CD4-positive, alpha-beta memory T cell (primary cell): ENCODE measurements at regions of chr22 and their contacts with region 1.

Region 1: DNA sequence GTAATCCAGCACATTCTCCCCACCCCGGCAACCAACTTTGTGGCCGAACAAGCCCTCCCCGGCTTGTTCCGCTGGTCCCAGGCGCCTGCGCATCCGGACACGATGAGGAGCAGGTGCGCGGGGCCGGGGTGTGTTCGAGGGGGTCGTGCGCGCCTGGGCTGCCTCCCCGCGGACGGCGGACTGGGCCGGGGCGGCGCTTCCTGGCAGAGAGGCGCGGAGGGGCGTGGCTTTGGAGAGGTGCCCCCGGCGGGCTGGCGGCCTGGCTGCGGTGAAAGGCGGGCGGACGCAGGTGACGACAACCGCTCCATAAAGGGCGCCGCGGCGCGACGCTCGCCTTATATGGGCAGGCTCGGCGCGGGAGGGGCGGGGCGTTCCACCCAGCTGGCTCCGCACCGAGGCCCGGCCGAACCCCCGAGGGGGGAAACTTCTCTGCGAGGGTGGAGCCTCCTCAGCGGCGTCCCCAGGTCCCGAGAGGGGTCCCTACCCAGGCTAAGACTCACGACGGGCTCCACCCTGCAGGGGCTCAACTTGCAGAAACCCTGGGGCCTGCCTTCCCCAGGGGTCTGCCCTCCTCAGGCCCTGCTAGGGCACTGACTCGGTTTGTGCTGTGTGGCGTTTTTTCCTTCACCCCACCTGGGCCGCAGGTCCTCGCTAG is 26.4 kb downstream of the TXN2 start:
- DNase-seq: peak; percentile 93 to 95 (median 94)
- H3K4me3 ChIP-seq: peak overlapping the region; percentile 57 to 78
- H3K4me3 Mint-ChIP-seq: peak overlapping the region; percentile 53 to 85 (median 82)
- H3K27ac ChIP-seq: peak overlapping the region; percentile 88
- H3K27ac Mint-ChIP-seq: peak overlapping the region; percentile 92 to 98 (median 93)
- H3K4me1 ChIP-seq: peaks cover 55% of the 10 kb centered on the region
- H3K4me1 Mint-ChIP-seq: peaks cover 29 to 48% (median 44%) of the 10 kb centered on the region in 4 donors
- H3K27me3 ChIP-seq: no peaks in the 10 kb centered on the region
- H3K27me3 Mint-ChIP-seq: no peaks in the 10 kb centered on the region

Region 2: GRCh38 chr22:36369922-36370791 is 84.9 kb before region 1 on chr22:
- CTCF ChIA-PET with region 1: interaction called, 3 read pairs
- POLR2A ChIA-PET with region 1: interaction called, 36 read pairs
- intact Hi-C with region 1: no loop called
- DNase-seq: peak in 1 of 5 donors; percentile 65
- H3K4me3 ChIP-seq: peak overlapping the region in 1 of 2 donors; percentile 32
- H3K4me3 Mint-ChIP-seq: peak overlapping the region; percentile 84 to 93 (median 88)
- H3K27ac ChIP-seq: peak overlapping the region; percentile 91
- H3K27ac Mint-ChIP-seq: peak overlapping the region; percentile 92 to 99 (median 98)
- H3K4me1 ChIP-seq: peaks cover 100% of the 10 kb centered on the region
- H3K4me1 Mint-ChIP-seq: peaks cover 74 to 100% (median 87%) of the 10 kb centered on the region in 4 donors
- H3K27me3 ChIP-seq: no peaks in the 10 kb centered on the region
- H3K27me3 Mint-ChIP-seq: no peaks in the 10 kb centered on the region

Region 3: DNA sequence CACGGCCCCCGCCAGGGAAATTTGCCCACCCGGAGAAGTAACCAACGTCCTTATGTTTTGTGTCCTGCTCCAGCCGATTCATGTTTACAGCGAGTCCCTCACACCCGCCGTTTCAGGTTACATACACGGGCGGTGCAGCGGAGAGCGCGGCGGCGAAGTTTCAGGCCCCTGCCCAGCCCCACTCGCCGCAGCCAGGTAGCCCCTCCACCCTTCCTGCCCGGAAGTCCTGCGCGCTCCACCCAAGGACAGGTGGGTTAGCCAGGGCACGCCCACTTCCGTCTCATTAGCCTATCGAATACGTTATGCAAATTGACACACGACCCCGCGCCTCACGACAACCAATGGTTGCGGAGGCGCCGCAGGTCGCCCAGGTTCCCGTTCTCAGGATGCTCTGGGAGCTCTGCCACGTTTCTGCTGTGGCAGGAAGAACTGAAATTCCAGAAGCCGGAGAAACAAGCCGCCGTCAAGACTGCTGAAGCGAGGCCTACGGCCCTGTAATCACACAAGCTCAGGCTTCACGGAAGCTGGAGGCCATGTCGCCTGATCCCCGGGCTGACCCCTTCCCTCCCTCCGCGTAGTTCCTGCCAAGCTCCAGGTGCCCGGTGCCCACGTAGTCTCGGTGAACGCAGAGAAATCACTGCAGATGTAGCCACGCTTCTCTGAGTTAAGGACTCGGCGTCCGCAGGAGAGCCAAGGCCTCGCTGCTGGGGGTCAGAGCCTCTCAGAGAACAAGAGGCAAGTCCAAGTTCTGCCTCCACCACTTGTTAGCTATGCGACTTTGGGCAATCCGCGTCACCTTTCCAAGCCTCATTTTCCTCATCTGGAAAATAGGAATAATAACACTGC is 44.9 kb before region 1 on chr22:
- CTCF ChIA-PET with region 1: interaction called, 3 read pairs
- POLR2A ChIA-PET with region 1: interaction called, 52 read pairs
- intact Hi-C with region 1: loop called (anchors 1 kb)
- DNase-seq: peak; percentile 58 to 80 (median 64)
- H3K4me3 ChIP-seq: peak overlapping the region in 1 of 2 donors; percentile 44
- H3K4me3 Mint-ChIP-seq: peak overlapping the region; percentile 61 to 79 (median 72)
- H3K27ac ChIP-seq: peak overlapping the region; percentile 49
- H3K27ac Mint-ChIP-seq: peak overlapping the region; percentile 86 to 96 (median 91)
- H3K4me1 ChIP-seq: peaks cover 65% of the 10 kb centered on the region
- H3K4me1 Mint-ChIP-seq: peaks cover 35 to 68% (median 52%) of the 10 kb centered on the region in 4 donors
- H3K27me3 ChIP-seq: no peaks in the 10 kb centered on the region
- H3K27me3 Mint-ChIP-seq: no peaks in the 10 kb centered on the region

Region 4: DNA sequence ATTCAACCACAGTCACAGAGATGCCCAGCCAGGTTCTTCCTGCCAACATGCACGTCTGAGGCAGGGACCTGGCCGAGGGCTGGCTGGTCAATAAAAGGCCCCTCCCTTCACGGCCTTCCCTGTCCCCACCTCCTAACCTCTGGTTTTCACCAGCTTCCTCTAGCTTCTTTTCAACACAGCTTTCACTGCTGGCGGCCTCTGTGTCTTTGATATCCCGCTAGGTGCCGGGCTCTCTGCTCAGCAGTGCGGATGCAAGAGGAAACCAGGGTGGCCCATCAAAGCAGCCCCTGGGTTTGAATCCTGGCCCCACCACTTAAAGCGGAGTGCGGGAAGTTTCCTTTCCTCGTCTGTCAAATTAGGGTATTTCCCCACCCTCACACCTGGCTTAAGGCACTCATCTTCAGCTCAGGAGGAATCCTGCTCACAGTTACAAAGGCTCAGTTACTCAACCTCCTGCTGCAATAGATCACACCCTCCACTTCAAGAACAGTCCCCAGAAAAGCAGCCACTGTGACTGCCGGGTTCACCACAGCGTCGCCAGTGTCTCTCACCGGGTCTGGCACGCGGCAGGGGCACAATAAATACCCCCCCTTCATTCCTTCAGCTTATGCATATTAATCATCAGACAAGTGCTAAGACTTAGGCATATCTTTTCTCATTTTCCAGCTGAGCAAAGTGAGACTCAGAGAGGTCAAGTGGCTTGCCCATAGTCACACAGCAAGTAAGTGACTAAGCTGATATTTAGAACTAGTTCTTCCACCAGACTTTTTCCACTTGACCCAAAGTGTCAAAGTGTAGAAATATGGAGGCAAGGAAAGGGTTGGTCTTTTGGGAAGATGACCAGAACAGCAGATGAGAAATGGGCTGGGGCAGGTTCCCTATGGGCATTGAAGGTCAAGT is 19.3 kb before region 1 on chr22:
- CTCF ChIA-PET with region 1: interaction called, 7 read pairs
- POLR2A ChIA-PET with region 1: interaction called, 10 read pairs
- intact Hi-C with region 1: loop called (anchors 1 kb)
- DNase-seq: peak; percentile 68 to 92 (median 76)
- H3K4me3 ChIP-seq: no peak overlapping the region
- H3K4me3 Mint-ChIP-seq: peak overlapping the region in 7 of 8 donors; percentile 60 to 84 (median 73)
- H3K27ac ChIP-seq: peak overlapping the region; percentile 57
- H3K27ac Mint-ChIP-seq: peak overlapping the region; percentile 82 to 97 (median 93)
- H3K4me1 ChIP-seq: peaks cover 29% of the 10 kb centered on the region
- H3K4me1 Mint-ChIP-seq: peaks cover 16 to 36% (median 25%) of the 10 kb centered on the region in 4 donors
- H3K27me3 ChIP-seq: no peaks in the 10 kb centered on the region
- H3K27me3 Mint-ChIP-seq: no peaks in the 10 kb centered on the region

Region 5: GRCh38 chr22:36481393-36482168 is 26.5 kb after region 1 on chr22 and contains the start of gene TXN2:
- CTCF ChIA-PET with region 1: interaction called, 3 read pairs
- POLR2A ChIA-PET with region 1: interaction called, 11 read pairs
- intact Hi-C with region 1: loop called (anchors 1 kb)
- DNase-seq: peak; percentile 97 to 99 (median 97)
- H3K4me3 ChIP-seq: peak within 1 kb of the TSS; percentile 80 to 86
- H3K4me3 Mint-ChIP-seq: peak within 1 kb of the TSS; percentile 90 to 100 (median 98)
- H3K27ac ChIP-seq: peak within 1 kb of the TSS; percentile 80
- H3K27ac Mint-ChIP-seq: peak within 1 kb of the TSS; percentile 93 to 100 (median 99)
- H3K4me1 ChIP-seq: peaks cover 22% of the 10 kb centered on the region
- H3K4me1 Mint-ChIP-seq: peaks cover 12 to 31% (median 17%) of the 10 kb centered on the region in 4 donors
- H3K27me3 ChIP-seq: no peaks in the 10 kb centered on the region
- H3K27me3 Mint-ChIP-seq: peaks cover 0 to 3% of the 10 kb centered on the region in 2 donors
- total RNA-seq, gene TXN2: 33.5 to 34.5 TPM

Region 6: GRCh38 chr22:36569999-36570398 is 115.0 kb after region 1 on chr22:
- CTCF ChIA-PET with region 1: no interaction called
- POLR2A ChIA-PET with region 1: no interaction called
- intact Hi-C with region 1: no loop called
- DNase-seq: no peak
- H3K4me3 ChIP-seq: no peak overlapping the region
- H3K4me3 Mint-ChIP-seq: no peak overlapping the region
- H3K27ac ChIP-seq: no peak overlapping the region
- H3K27ac Mint-ChIP-seq: no peak overlapping the region
- H3K4me1 ChIP-seq: no peaks in the 10 kb centered on the region
- H3K4me1 Mint-ChIP-seq: no peaks in the 10 kb centered on the region
- H3K27me3 ChIP-seq: no peaks in the 10 kb centered on the region
- H3K27me3 Mint-ChIP-seq: peaks cover 11 to 24% of the 10 kb centered on the region in 2 donors

Region 7: GRCh38 chr22:36891646-36892045 is 436.6 kb after region 1 on chr22:
- CTCF ChIA-PET with region 1: no interaction called
- POLR2A ChIA-PET with region 1: no interaction called
- intact Hi-C with region 1: no loop called
- DNase-seq: no peak
- H3K4me3 ChIP-seq: no peak overlapping the region
- H3K4me3 Mint-ChIP-seq: no peak overlapping the region
- H3K27ac ChIP-seq: no peak overlapping the region
- H3K27ac Mint-ChIP-seq: peak overlapping the region in 1 of 7 donors; percentile 22
- H3K4me1 ChIP-seq: peaks cover 12% of the 10 kb centered on the region
- H3K4me1 Mint-ChIP-seq: peaks cover 4 to 8% (median 7%) of the 10 kb centered on the region in 4 donors
- H3K27me3 ChIP-seq: no peaks in the 10 kb centered on the region
- H3K27me3 Mint-ChIP-seq: peaks cover 0 to 2% of the 10 kb centered on the region in 2 donors